Ovary (tissue), 10 donors: ENCODE measurements at regions of chr17 and their contacts with region 1.

Region 1: GRCh38 chr17:38752119-38752929 is at the start of gene PSMB3:
- DNase-seq: peak; percentile 93 to 98 (median 95)
- H3K4me3 ChIP-seq: peak within 1 kb of the TSS; percentile 98
- H3K27ac ChIP-seq: peak within 1 kb of the TSS in 1 of 2 donors; percentile 73
- H3K4me1 ChIP-seq: peaks cover 2% of the 10 kb centered on the region
- H3K27me3 ChIP-seq: no peaks in the 10 kb centered on the region
- CTCF ChIP-seq: no peak
- EP300 ChIP-seq: no peak
- POLR2A ChIP-seq: peak; percentile 53
- total RNA-seq, gene PSMB3: 77.0 to 145 (median 82.0) TPM

Region 2: DNA sequence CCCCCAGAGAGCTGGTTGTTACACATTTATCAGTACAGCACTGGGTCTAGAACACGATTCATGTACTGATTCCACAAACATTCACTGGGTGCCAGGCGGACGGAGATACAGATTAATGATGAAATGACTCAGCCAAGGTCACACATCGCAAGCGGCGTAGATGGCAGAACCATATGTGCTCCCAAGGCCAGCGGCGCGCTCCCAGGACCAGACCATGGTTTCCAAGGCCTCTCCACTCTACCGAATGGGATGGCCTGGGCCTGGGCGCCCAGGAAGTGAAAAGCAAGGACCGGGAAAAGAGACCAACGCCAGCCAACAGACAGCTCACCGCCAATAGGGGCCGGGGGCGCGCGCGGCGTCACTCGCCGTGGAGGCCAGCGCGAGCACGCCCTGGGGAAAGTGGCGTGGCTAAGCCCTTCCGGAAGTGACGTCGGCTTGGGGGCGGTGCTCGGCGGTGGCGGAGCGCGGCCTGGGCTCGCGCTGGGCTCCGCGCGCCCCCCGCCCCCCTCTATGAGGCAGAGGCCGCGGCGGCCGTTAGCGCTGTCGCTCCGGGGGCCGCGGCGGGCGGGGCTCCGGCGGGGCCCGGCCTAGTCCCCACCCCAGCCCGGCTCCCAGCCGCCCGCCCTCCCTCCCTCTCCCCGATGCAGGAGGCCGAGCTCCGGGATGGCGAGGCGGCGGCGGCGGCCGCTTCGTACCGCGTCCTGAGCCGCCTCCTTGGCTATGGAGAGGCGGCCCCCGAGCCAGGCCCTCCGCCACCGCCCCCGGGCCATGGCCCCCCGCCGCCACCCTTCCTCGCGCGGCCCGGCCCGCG is 400.7 kb before region 1 on chr17 and contains the start of gene SOCS7:
- intact Hi-C with region 1: loop called in 1 of 4 experiments (anchors 10 kb)
- DNase-seq: peak; percentile 95 to 97 (median 97)
- H3K4me3 ChIP-seq: peak within 1 kb of the TSS; percentile 64
- H3K27ac ChIP-seq: peak within 1 kb of the TSS; percentile 40 to 75
- H3K4me1 ChIP-seq: peaks cover 11% of the 10 kb centered on the region
- H3K27me3 ChIP-seq: no peaks in the 10 kb centered on the region
- CTCF ChIP-seq: no peak
- EP300 ChIP-seq: no peak
- POLR2A ChIP-seq: peak; percentile 79
- total RNA-seq, gene SOCS7: 12.8 to 23.8 (median 21.1) TPM

Region 3: GRCh38 chr17:38702166-38702899 is 50.0 kb before region 1 on chr17:
- intact Hi-C with region 1: loop called in 1 of 4 experiments (anchors 5 kb)
- DNase-seq: peak; percentile 87 to 91 (median 88)
- H3K4me3 ChIP-seq: peak overlapping the region; percentile 86
- H3K27ac ChIP-seq: peak overlapping the region; percentile 49 to 93
- H3K4me1 ChIP-seq: peaks cover 13% of the 10 kb centered on the region
- H3K27me3 ChIP-seq: no peaks in the 10 kb centered on the region
- CTCF ChIP-seq: peak in 1 of 3 donors; percentile 18
- EP300 ChIP-seq: no peak
- POLR2A ChIP-seq: peak; percentile 93

Region 4: DNA sequence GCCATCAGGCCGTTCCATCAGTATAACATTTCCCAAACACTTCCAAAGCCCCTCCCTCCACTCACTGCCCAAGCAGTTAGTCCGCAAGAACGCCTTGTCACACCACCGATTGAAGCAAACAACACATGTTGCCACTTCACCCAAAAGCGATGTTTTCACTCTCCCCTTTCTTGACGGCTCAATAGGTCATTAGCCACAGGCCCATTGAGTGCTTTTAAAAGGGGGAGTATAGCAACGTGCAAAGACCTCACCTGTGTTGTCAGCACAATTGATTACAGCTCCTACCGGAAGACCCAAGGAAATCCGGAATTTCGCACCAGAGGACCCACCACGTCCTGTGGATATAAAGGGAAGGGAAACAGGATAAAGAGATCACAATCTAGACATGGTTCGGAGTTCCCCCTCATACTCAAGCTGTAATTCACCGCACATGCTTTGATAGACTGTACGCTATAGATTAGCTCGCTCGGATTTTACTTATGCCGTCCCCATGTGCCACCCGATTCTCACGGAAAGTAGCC is 100.5 kb after region 1 on chr17:
- intact Hi-C with region 1: no loop called
- DNase-seq: no peak
- H3K4me3 ChIP-seq: peak overlapping the region; percentile 49
- H3K27ac ChIP-seq: peak overlapping the region; percentile 75 to 94
- H3K4me1 ChIP-seq: peaks cover 3% of the 10 kb centered on the region
- H3K27me3 ChIP-seq: no peaks in the 10 kb centered on the region
- CTCF ChIP-seq: no peak
- EP300 ChIP-seq: no peak
- POLR2A ChIP-seq: no peak